Calu3 (cell line): ENCODE measurements at regions of chr2 and their contacts with region 1.

Region 1: GRCh38 chr2:48829036-48829435 is 73.5 kb upstream of the LHCGR start:
- DNase-seq: no peak
- H3K4me3 Mint-ChIP-seq: no peak overlapping the region
- H3K27ac Mint-ChIP-seq: no peak overlapping the region
- H3K4me1 Mint-ChIP-seq: no peaks in the 10 kb centered on the region
- H3K27me3 Mint-ChIP-seq: peaks cover 8% of the 10 kb centered on the region
- CTCF ChIP-seq: no peak

Region 2: GRCh38 chr2:48496849-48497248 is 332.2 kb before region 1 on chr2:
- CTCF ChIA-PET with region 1: interaction called, 15 read pairs
- intact Hi-C with region 1: no loop called
- DNase-seq: no peak
- H3K4me3 Mint-ChIP-seq: no peak overlapping the region
- H3K27ac Mint-ChIP-seq: no peak overlapping the region
- H3K4me1 Mint-ChIP-seq: no peaks in the 10 kb centered on the region
- H3K27me3 Mint-ChIP-seq: no peaks in the 10 kb centered on the region
- CTCF ChIP-seq: no peak

Region 3: GRCh38 chr2:48617618-48618017 is 211.4 kb before region 1 on chr2 and contains the start of gene GTF2A1L:
- CTCF ChIA-PET with region 1: no interaction called
- intact Hi-C with region 1: no loop called
- DNase-seq: no peak
- H3K4me3 Mint-ChIP-seq: no peak within 1 kb of the TSS
- H3K27ac Mint-ChIP-seq: no peak within 1 kb of the TSS
- H3K4me1 Mint-ChIP-seq: no peaks in the 10 kb centered on the region
- H3K27me3 Mint-ChIP-seq: peaks cover 8% of the 10 kb centered on the region
- CTCF ChIP-seq: no peak
- total RNA-seq, gene GTF2A1L: not detected in 2 replicates